HepG2 (cell line): ENCODE measurements at regions of chr12 and their contacts with region 1.

Region 1: DNA sequence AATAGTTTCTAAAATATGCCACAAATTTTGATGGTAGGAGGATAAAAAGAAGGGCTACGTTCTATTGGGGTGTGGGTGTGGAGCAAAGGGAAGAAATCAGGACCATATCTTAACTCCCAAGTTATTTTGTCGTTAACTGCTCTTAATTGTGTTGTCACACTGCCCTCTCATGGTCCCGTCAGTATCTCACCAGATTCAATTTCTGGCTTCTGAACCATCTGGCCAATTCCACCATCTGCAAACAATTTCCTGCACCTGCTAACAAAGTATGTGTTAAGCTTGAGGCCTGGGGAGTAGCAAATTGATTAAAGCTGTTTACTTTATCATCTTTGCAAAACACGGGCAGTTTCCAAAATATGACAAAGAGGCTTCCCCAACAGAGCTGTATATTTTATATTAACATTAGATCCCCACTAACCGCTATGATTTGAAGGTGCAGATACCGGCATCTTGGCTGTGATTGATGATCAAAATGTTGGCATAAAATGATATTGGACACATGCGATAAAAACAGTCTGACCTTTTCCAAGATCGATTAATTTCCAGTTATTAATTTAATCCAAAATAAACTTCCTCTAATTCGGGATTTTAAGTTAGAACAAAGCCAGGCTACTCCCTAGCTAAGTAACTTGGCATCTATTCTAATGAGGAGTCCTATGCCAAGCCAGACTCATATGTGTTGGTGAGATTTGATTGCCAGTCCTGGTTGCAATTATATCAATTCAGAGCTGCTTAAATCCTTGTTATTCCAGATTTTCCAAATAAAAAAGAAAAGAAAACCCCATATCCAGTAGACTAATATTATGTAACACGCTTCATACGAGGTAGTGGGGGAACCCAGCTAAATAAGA is 6.9 kb upstream of the DNM1L start:
- DNase-seq: peak; percentile 51
- ATAC-seq: peak; percentile 76
- H3K4me3 ChIP-seq: no peak overlapping the region
- H3K27ac ChIP-seq: no peak overlapping the region
- H3K4me1 ChIP-seq: peaks cover 33% of the 10 kb centered on the region
- H3K27me3 ChIP-seq: no peaks in the 10 kb centered on the region
- CTCF ChIP-seq: peak; percentile 83
- EP300 ChIP-seq: no peak
- POLR2A ChIP-seq: no peak
- RAD21 ChIP-seq: peak; percentile 74

Region 2: GRCh38 chr12:31369712-31370521 is 1302.2 kb before region 1 on chr12:
- CTCF ChIA-PET with region 1: no interaction called
- POLR2A ChIA-PET with region 1: no interaction called
- in situ Hi-C with region 1: no loop called
- intact Hi-C with region 1: no loop called
- DNase-seq: peak; percentile 24
- ATAC-seq: peak; percentile 59
- H3K4me3 ChIP-seq: peak overlapping the region; percentile 54 to 59 (median 57)
- H3K27ac ChIP-seq: peak overlapping the region; percentile 58
- H3K4me1 ChIP-seq: peaks cover 37% of the 10 kb centered on the region
- H3K27me3 ChIP-seq: no peaks in the 10 kb centered on the region
- CTCF ChIP-seq: no peak
- EP300 ChIP-seq: no peak
- POLR2A ChIP-seq: no peak
- RAD21 ChIP-seq: no peak

Region 3: DNA sequence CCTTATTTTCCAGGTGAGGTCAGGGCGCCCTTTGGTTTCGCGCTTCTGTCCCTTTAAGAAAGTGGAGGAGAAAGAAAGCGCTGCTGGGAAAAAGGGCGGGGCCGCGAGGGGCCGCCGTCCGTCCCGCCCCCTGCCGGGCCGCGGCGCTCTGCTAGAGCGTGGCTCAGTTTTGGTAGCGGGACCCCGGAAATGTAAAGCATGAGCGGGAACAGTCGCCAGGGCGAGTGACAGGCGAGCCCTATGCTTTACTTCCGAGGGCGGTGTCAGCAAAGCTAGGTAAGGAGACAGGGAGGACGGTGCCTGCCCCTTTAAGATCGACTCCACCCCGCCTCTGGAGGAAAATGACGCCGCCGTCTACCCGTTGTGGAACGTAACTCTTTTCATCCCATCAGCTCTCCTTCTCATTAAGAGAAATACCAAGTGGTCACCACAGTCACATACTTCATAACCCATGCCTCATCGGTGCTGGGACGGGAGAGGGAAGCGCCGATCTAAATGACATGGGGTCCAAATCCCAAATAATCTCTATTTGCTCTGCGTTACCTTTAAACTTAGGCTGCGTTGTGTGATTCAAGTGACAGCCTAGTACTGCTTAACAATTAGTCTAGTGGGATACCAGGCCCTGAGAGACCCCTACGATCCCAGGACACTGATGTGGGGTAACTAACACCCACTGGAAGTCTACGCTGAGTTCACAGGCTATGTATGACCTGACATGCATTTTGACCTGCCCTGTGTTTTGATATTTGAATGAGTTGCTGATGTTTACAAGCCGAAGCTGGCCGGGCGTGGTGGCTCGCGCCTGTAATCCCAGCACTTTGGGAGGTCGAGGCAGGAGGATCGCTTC is 1012.8 kb before region 1 on chr12 and contains the start of gene ETFBKMT:
- CTCF ChIA-PET with region 1: no interaction called
- POLR2A ChIA-PET with region 1: no interaction called
- in situ Hi-C with region 1: loop called (anchors 25 kb)
- intact Hi-C with region 1: no loop called
- DNase-seq: peak; percentile 90
- ATAC-seq: peak; percentile 98
- H3K4me3 ChIP-seq: peak within 1 kb of the TSS; percentile 76 to 80 (median 78)
- H3K27ac ChIP-seq: peak within 1 kb of the TSS; percentile 87
- H3K4me1 ChIP-seq: peaks cover 21% of the 10 kb centered on the region
- H3K27me3 ChIP-seq: peaks cover 0 to 8% of the 10 kb centered on the region in 2 experiments; a peak in 2 of 5 replicates
- CTCF ChIP-seq: peak; percentile 55
- EP300 ChIP-seq: no peak
- POLR2A ChIP-seq: peak; percentile 43 to 52; a peak in 2 of 4 replicates
- RAD21 ChIP-seq: peak; percentile 57; the same call in 1 of the 2 replicates
- total RNA-seq, gene ETFBKMT: 0.93 and 1.1 TPM in 2 replicates

Region 4: GRCh38 chr12:32698285-32698684 is 26.1 kb after region 1 on chr12:
- CTCF ChIA-PET with region 1: no interaction called
- POLR2A ChIA-PET with region 1: no interaction called
- in situ Hi-C with region 1: no loop called
- intact Hi-C with region 1: no loop called
- DNase-seq: no peak
- ATAC-seq: no peak
- H3K4me3 ChIP-seq: no peak overlapping the region
- H3K27ac ChIP-seq: no peak overlapping the region
- H3K4me1 ChIP-seq: no peaks in the 10 kb centered on the region
- H3K27me3 ChIP-seq: no peaks in the 10 kb centered on the region
- CTCF ChIP-seq: no peak
- EP300 ChIP-seq: no peak
- POLR2A ChIP-seq: no peak
- RAD21 ChIP-seq: no peak